Colonic mucosa (tissue), 4 donors: ENCODE measurements at regions of chr16 and their contacts with region 1.

Region 1: GRCh38 chr16:5615868-5616642 is 518.5 kb upstream of the EEF2KMT start:
- DNase-seq: peak; percentile 59
- H3K4me3 ChIP-seq: no peak overlapping the region
- H3K27ac ChIP-seq: no peak overlapping the region
- H3K4me1 ChIP-seq: no peaks in the 10 kb centered on the region
- H3K27me3 ChIP-seq: no peaks in the 10 kb centered on the region
- CTCF ChIP-seq: peak; percentile 64

Region 2: GRCh38 chr16:5412728-5413127 is 203.3 kb before region 1 on chr16:
- intact Hi-C with region 1: no loop called
- DNase-seq: no peak
- H3K4me3 ChIP-seq: no peak overlapping the region
- H3K27ac ChIP-seq: no peak overlapping the region
- H3K4me1 ChIP-seq: no peaks in the 10 kb centered on the region
- H3K27me3 ChIP-seq: no peaks in the 10 kb centered on the region
- CTCF ChIP-seq: no peak

Region 3: DNA sequence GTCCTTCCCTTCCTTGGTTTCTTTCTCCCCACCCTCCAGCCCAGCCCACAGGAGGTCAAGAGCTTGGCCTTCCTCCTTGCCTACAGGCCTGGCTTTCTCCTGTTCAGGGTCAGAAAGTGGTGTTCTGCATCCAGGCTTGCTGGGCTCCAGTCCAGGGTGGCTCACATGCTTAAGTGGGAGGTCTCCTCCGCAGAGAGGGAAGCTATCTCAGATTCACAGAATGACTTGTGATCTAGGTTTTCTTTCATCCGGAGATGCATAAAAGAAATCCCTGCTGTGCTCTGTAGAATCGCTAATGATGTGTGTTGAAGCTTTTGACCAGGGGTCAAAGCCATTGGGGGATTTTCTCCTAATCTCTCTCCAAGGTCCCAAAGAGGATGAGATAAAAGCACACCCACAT is 136.1 kb before region 1 on chr16:
- intact Hi-C with region 1: no loop called
- DNase-seq: no peak
- H3K4me3 ChIP-seq: no peak overlapping the region
- H3K27ac ChIP-seq: no peak overlapping the region
- H3K4me1 ChIP-seq: no peaks in the 10 kb centered on the region
- H3K27me3 ChIP-seq: no peaks in the 10 kb centered on the region
- CTCF ChIP-seq: no peak

Region 4: GRCh38 chr16:5502467-5502869 is 113.6 kb before region 1 on chr16:
- intact Hi-C with region 1: loop called (anchors 5 kb)
- DNase-seq: no peak
- H3K4me3 ChIP-seq: no peak overlapping the region
- H3K27ac ChIP-seq: no peak overlapping the region
- H3K4me1 ChIP-seq: no peaks in the 10 kb centered on the region
- H3K27me3 ChIP-seq: no peaks in the 10 kb centered on the region
- CTCF ChIP-seq: no peak

Region 5: DNA sequence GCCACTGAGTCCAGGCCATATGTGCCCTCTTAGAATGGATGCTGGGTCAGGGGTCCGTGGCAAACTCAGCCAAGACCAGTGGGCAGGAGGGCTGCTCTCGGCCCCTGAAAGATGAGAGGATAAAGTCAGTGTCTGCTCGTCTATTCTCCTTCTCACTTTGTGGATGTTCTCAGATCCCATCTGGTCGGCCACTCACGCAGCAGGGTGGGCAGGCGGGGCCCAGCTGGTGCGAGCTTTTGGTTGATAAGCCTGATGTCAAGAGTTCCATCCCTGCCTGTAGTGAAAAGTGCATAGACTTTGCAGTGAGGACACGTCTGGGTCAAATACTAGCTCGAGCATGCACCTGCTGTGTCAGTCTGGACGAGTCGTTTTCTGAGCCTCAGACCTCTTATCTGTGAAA is 37.7 kb after region 1 on chr16:
- intact Hi-C with region 1: no loop called
- DNase-seq: no peak
- H3K4me3 ChIP-seq: no peak overlapping the region
- H3K27ac ChIP-seq: no peak overlapping the region
- H3K4me1 ChIP-seq: no peaks in the 10 kb centered on the region
- H3K27me3 ChIP-seq: no peaks in the 10 kb centered on the region
- CTCF ChIP-seq: no peak